Caco-2 (cell line): ENCODE measurements at regions of chr16 and their contacts with region 1.

Region 1: DNA sequence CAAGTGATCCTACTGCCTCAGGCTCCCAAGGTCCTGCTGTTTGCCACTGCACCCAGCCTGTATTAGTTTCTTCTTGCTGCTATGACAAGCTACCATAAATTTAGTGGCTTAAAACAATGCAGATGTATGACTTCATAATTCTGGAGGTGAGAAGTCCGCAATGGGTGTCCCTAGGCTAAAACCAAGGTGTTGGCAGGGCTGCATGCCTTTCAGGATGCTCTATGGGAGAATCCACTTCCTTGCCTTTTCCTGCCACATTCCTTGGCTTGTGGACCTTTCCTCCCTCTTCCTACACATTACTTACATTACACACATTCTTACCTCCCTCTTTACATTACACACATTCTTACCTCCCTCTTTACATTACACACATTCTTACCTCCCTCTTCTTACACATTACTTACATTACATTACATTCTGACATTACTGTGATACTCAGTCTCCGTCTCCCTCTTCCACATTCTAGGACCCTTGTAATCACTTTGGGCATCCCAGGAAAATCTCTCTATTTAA is 14.2 kb upstream of the CDH5 start:
- DNase-seq: peak in 1 of 2 experiments; percentile 20
- H3K4me3 ChIP-seq: no peak overlapping the region
- H3K4me3 Mint-ChIP-seq: no peak overlapping the region
- H3K27ac Mint-ChIP-seq: no peak overlapping the region
- H3K4me1 ChIP-seq: peaks cover 31% of the 10 kb centered on the region
- H3K4me1 Mint-ChIP-seq: peaks cover 7% of the 10 kb centered on the region
- H3K27me3 ChIP-seq: no peaks in the 10 kb centered on the region
- H3K27me3 Mint-ChIP-seq: no peaks in the 10 kb centered on the region
- CTCF ChIP-seq: no peak

Region 2: DNA sequence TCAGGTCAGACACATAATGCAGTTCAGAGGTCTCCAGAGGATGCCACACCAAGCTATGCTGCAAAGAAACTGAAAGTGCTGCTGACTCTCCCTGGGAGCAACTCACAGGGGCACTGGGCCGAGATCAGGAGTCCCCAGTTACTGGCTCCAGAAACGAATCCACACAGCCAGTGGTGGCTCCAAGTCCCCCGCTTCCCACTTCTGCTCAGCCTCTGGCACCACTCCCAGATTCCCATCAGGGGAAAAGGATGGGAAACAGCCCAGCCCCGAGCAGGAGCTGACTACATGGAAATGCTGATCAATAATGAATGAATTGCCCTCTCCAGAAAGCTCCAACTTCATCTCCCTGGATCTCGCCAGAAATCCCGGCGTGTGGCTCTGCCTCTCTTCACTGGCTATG is 48.1 kb before region 1 on chr16:
- CTCF ChIA-PET with region 1: no interaction called
- POLR2A ChIA-PET with region 1: no interaction called
- intact Hi-C with region 1: no loop called
- DNase-seq: peak in 1 of 2 experiments; percentile 21
- H3K4me3 ChIP-seq: no peak overlapping the region
- H3K4me3 Mint-ChIP-seq: no peak overlapping the region
- H3K27ac Mint-ChIP-seq: no peak overlapping the region
- H3K4me1 ChIP-seq: no peaks in the 10 kb centered on the region
- H3K4me1 Mint-ChIP-seq: no peaks in the 10 kb centered on the region
- H3K27me3 ChIP-seq: peaks cover 2% of the 10 kb centered on the region
- H3K27me3 Mint-ChIP-seq: peaks cover 38% of the 10 kb centered on the region
- CTCF ChIP-seq: no peak

Region 3: GRCh38 chr16:66364117-66364967 is 12.1 kb after region 1 on chr16:
- CTCF ChIA-PET with region 1: no interaction called
- POLR2A ChIA-PET with region 1: interaction called, 10 read pairs
- intact Hi-C with region 1: no loop called
- DNase-seq: no peak
- H3K4me3 ChIP-seq: no peak overlapping the region
- H3K4me3 Mint-ChIP-seq: no peak overlapping the region
- H3K27ac Mint-ChIP-seq: peak overlapping the region; percentile 24
- H3K4me1 ChIP-seq: peaks cover 8% of the 10 kb centered on the region; the same call in 1 of the 2 replicates
- H3K4me1 Mint-ChIP-seq: peaks cover 17% of the 10 kb centered on the region
- H3K27me3 ChIP-seq: no peaks in the 10 kb centered on the region
- H3K27me3 Mint-ChIP-seq: peaks cover 3% of the 10 kb centered on the region
- CTCF ChIP-seq: no peak